ENCODE measurements at regions of chr5 and their contacts with region 1.

Region 1: GRCh38 chr5:53874409-53874808 is 314.0 kb downstream of the NDUFS4 start:
- DNase-seq: no peak
- ATAC-seq: no peak
- H3K4me3 ChIP-seq: no peak overlapping the region
- H3K27ac ChIP-seq: no peak overlapping the region
- H3K4me1 ChIP-seq: no peaks in the 10 kb centered on the region; the same call in 1 of the 2 replicates
- H3K27me3 ChIP-seq: no peaks in the 10 kb centered on the region
- CTCF ChIP-seq: no peak; the same call in 1 of the 2 replicates
- POLR2A ChIP-seq: no peak
- RAD21 ChIP-seq: peak; percentile 25; the same call in 1 of the 2 replicates

Region 2: DNA sequence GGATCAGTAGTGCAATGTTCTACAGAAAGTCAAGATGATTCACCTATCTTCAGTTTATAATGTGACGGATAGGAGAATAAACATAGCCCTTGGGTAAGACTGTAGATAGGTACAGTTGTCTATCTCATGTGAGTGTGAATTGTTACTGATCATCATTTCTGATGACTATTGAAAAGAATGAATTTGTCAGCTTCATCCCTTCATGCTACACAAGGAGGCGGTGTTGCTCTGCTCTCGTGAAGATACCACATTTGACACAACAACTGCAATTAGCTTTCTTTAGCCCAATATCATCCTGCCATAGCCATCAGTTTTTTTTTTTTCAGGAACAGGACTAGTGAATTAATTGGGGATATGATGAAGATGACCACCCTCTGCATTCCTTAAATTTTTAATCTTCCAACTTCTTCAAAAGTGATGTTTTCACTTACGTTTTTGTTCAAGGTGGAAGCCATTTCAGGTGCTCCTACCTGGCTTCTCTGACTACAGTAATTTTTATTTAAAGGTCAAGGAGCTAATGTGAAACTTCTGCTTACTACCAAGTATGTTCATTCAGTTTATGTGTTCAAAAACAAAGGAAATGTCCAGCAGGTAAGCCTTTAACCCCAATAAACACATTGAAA is 612.0 kb before region 1 on chr5:
- CTCF ChIA-PET with region 1: no interaction called
- POLR2A ChIA-PET with region 1: no interaction called
- dilution Hi-C with region 1: no loop called
- in situ Hi-C with region 1: no loop called
- intact Hi-C with region 1: loop called (anchors 10 kb)
- DNase-seq: peak; percentile 72
- ATAC-seq: peak; percentile 80
- H3K4me3 ChIP-seq: no peak overlapping the region
- H3K27ac ChIP-seq: no peak overlapping the region
- H3K4me1 ChIP-seq: peaks cover 2% of the 10 kb centered on the region; the same call in 1 of the 2 replicates
- H3K27me3 ChIP-seq: no peaks in the 10 kb centered on the region
- CTCF ChIP-seq: peak; percentile 90
- POLR2A ChIP-seq: peak; percentile 50; the same call in 1 of the 2 replicates
- RAD21 ChIP-seq: peak; percentile 96

Region 3: GRCh38 chr5:54243473-54244080 is 369.2 kb after region 1 on chr5:
- CTCF ChIA-PET with region 1: no interaction called
- POLR2A ChIA-PET with region 1: no interaction called
- dilution Hi-C with region 1: no loop called
- in situ Hi-C with region 1: no loop called
- intact Hi-C with region 1: no loop called
- DNase-seq: peak; percentile 47
- ATAC-seq: peak; percentile 76
- H3K4me3 ChIP-seq: no peak overlapping the region
- H3K27ac ChIP-seq: no peak overlapping the region
- H3K4me1 ChIP-seq: no peaks in the 10 kb centered on the region
- H3K27me3 ChIP-seq: no peaks in the 10 kb centered on the region
- CTCF ChIP-seq: peak; percentile 83
- POLR2A ChIP-seq: no peak
- RAD21 ChIP-seq: peak; percentile 86